Spleen (tissue), 13 donors: ENCODE measurements at regions of chr5 and their contacts with region 1.

Region 1: GRCh38 chr5:122392824-122393223 is 80.8 kb downstream of the SNCAIP start:
- DNase-seq: no peak
- H3K4me3 ChIP-seq: no peak overlapping the region
- H3K27ac ChIP-seq: no peak overlapping the region
- H3K4me1 ChIP-seq: no peaks in the 10 kb centered on the region
- H3K27me3 ChIP-seq: no peaks in the 10 kb centered on the region
- CTCF ChIP-seq: no peak
- POLR2A ChIP-seq: no peak

Region 2: DNA sequence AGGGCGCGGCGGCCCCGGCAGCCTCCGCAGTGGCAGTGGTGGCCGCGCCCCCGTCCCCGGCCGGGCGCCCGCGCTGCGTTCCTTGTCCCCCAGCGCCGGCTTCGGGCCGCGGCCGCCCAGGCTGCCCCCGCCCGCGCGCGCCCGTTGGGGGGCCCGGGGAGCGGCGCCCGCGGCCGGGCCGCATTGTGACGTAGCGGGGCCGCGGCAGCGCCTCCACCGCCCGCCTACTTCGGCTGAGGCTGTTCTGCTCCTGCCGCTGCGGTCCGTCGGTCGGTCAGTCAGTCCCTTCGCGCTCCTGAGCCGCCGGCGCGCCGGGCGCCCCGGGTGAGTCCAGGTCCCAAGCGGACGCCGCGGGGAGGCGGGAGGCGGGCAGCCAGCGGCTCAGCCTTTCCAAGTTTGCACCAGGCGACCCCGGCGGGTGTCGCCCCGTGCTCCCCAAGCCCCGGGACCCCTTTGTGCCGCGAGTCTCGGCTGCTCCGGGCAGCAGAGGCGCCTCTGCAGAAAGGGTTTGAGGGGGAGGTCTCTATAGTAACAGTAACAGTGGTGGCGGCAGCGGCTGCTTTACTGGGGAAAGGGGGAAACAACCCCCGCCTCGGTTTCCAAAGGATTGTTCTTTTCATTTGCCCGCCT is 80.7 kb before region 1 on chr5 and contains the start of gene SNCAIP:
- intact Hi-C with region 1: loop called (anchors 10 kb)
- DNase-seq: peak; percentile 80
- H3K4me3 ChIP-seq: peak within 1 kb of the TSS; percentile 26 to 70 (median 47)
- H3K27ac ChIP-seq: peak within 1 kb of the TSS; percentile 5 to 86 (median 78)
- H3K4me1 ChIP-seq: peaks cover 0 to 23% (median 13%) of the 10 kb centered on the region in 6 donors
- H3K27me3 ChIP-seq: peaks cover 0 to 64% (median 15%) of the 10 kb centered on the region in 7 donors
- CTCF ChIP-seq: no peak
- POLR2A ChIP-seq: peak in 1 of 3 donors; percentile 27
- total RNA-seq, gene SNCAIP: 9.9 to 51.3 (median 19.8) TPM